Common myeloid progenitor, CD34-positive (primary cell): ENCODE measurements at regions of chr1 and their contacts with region 1.

Region 1: DNA sequence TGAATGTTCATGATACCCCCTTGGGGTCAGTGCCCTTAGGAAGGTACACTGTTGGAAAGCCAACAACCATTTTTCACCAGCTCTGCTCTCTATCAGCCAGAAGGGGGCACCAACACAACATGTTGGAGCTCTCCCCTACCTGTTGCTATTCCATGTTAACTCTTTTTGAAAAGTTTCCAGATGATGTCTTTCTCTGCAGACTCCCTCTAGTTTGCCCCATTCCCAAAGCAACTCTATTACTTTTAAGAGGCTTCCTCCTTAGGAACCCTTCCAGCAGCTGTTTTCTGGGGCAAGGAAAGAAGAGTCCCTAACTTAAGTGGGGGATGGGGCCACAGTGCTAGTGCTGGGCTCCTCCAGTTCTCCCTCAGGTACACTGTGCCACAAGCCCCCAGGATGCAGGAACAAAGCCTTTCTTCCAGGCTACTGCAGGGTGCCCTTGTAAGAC is 22.9 kb upstream of the NDC1 start:
- DNase-seq: peak; percentile 63 to 78 (median 72)
- H3K4me3 ChIP-seq: no peak overlapping the region
- H3K27ac ChIP-seq: no peak overlapping the region
- H3K4me1 ChIP-seq: peaks cover 0 to 7% (median 3%) of the 10 kb centered on the region in 4 experiments
- H3K27me3 ChIP-seq: no peaks in the 10 kb centered on the region

Region 2: DNA sequence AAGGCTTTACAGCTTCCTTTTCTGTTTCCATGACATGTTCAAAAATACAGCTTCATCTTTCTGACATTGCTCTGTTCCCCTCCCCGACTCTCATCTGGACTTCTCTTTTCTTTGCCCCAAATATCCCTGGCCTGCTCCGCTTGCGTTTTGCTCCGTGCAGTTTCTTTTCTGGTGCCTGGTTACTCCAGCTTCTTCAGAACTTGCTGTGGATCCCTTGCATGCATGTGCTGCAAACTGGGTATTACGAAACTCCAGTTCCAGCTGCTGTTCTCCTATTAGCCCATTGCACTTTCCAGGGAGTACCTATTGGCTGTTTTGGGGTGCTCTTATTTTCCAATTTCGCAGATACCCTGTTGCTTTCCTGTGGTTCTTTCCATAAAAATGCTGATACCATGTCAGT is 13.0 kb before region 1 on chr1:
- CTCF ChIA-PET with region 1: interaction called, 10 read pairs
- POLR2A ChIA-PET with region 1: interaction called, 3 read pairs
- DNase-seq: no peak
- H3K4me3 ChIP-seq: no peak overlapping the region
- H3K27ac ChIP-seq: no peak overlapping the region
- H3K4me1 ChIP-seq: no peaks in the 10 kb centered on the region
- H3K27me3 ChIP-seq: no peaks in the 10 kb centered on the region